ENCODE measurements at regions of chr12 and their contacts with region 1.

Region 1: GRCh38 chr12:56636675-56637540 is 6.8 kb upstream of the BAZ2A start:
- DNase-seq: peak; percentile 99
- H3K4me3 ChIP-seq: peak overlapping the region; percentile 67
- H3K27me3 ChIP-seq: no peaks in the 10 kb centered on the region
- CTCF ChIP-seq: peak; percentile 82

Region 2: DNA sequence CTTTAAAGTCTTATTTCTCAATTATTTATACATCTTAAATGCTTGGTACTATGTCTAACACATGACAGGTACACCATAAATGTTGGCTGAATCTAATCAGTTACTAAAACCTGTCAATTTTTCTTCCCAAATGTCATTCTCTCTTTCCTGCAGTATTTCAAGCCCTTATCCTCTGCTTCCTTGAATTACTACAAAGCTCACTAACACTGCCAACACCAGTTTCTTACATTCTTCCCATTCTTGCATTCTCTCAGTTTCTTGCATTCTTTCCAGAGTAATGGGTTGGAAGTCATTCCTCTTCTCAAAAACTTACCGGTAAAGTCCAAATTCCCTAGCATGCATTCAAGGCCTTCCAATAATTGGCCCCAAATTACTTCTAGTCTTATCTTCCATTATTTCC is 438.1 kb before region 1 on chr12:
- CTCF ChIA-PET with region 1: no interaction called
- POLR2A ChIA-PET with region 1: no interaction called
- DNase-seq: no peak
- H3K4me3 ChIP-seq: no peak overlapping the region
- H3K27me3 ChIP-seq: no peaks in the 10 kb centered on the region
- CTCF ChIP-seq: no peak

Region 3: DNA sequence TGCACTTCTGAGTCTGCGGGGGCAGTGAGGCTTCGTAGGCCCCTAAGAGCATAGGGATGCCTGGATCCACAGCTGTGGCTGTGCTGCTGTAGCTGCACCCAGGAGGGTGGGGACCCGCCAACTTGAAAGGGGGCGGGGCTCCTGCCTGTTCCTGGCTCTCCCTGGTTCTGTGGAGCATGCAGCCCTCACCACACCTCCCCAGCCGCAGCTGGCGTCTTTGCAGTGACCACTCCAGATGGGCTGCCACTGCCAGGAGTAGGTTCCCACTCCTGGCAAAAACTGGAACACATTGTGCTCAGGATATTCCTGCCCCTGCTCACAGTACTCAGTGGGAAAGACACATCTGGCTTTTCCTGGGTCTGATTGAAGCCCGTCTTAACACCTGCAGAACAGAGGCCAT is 223.5 kb before region 1 on chr12:
- CTCF ChIA-PET with region 1: no interaction called
- POLR2A ChIA-PET with region 1: no interaction called
- DNase-seq: no peak
- H3K4me3 ChIP-seq: no peak overlapping the region
- H3K27me3 ChIP-seq: no peaks in the 10 kb centered on the region
- CTCF ChIP-seq: no peak

Region 4: DNA sequence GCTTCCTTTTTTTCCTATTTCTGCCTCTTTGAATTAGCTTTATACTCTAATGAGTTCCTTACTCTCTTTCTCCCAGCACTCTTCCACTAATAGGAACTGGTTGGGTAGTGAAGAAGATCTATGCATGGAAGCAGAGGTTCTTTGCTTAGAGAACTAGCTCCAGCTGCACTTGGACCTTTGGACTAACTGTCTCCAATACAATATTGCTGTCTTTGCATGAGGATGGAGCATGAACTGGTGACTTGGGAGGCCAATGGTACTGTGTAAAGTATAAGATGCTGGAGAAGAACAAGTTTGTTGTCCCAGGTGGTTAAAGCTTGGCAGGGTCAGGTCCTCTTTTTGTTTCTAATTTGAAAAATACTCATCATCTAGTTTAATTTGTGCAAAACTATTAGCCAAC is 146.5 kb before region 1 on chr12:
- CTCF ChIA-PET with region 1: interaction called, 15 read pairs
- POLR2A ChIA-PET with region 1: interaction called, 4 read pairs
- DNase-seq: no peak
- H3K4me3 ChIP-seq: no peak overlapping the region
- H3K27me3 ChIP-seq: peaks cover 6% of the 10 kb centered on the region
- CTCF ChIP-seq: no peak

Region 5: GRCh38 chr12:56510786-56511185 is 126.1 kb before region 1 on chr12:
- CTCF ChIA-PET with region 1: interaction called, 41 read pairs
- POLR2A ChIA-PET with region 1: interaction called, 10 read pairs
- DNase-seq: no peak
- H3K4me3 ChIP-seq: no peak overlapping the region
- H3K27me3 ChIP-seq: no peaks in the 10 kb centered on the region
- CTCF ChIP-seq: no peak

Region 6: DNA sequence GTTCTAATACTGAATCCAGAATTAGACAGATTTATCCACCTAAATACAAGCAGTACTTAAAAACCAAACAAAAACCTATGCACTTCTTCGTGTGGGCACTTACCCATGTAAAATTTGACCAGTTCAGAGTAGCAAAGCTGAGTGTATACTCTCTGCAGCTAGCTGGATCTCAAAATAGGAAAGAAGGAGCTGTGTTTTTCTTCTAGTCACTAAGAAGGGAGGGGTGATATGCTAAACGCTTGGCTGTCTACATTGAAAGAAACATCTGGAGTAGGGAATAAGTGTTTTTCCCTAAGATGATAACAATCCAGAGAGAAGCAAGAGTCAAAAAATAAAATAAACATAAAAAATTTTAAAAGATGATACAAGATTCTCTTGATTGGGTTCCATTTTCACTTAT is 95.3 kb before region 1 on chr12:
- CTCF ChIA-PET with region 1: no interaction called
- POLR2A ChIA-PET with region 1: no interaction called
- DNase-seq: no peak
- H3K4me3 ChIP-seq: no peak overlapping the region
- H3K27me3 ChIP-seq: no peaks in the 10 kb centered on the region
- CTCF ChIP-seq: no peak

Region 7: GRCh38 chr12:56571126-56571525 is 65.8 kb before region 1 on chr12:
- CTCF ChIA-PET with region 1: interaction called, 14 read pairs
- POLR2A ChIA-PET with region 1: no interaction called
- DNase-seq: no peak
- H3K4me3 ChIP-seq: no peak overlapping the region
- H3K27me3 ChIP-seq: no peaks in the 10 kb centered on the region
- CTCF ChIP-seq: no peak

Region 8: DNA sequence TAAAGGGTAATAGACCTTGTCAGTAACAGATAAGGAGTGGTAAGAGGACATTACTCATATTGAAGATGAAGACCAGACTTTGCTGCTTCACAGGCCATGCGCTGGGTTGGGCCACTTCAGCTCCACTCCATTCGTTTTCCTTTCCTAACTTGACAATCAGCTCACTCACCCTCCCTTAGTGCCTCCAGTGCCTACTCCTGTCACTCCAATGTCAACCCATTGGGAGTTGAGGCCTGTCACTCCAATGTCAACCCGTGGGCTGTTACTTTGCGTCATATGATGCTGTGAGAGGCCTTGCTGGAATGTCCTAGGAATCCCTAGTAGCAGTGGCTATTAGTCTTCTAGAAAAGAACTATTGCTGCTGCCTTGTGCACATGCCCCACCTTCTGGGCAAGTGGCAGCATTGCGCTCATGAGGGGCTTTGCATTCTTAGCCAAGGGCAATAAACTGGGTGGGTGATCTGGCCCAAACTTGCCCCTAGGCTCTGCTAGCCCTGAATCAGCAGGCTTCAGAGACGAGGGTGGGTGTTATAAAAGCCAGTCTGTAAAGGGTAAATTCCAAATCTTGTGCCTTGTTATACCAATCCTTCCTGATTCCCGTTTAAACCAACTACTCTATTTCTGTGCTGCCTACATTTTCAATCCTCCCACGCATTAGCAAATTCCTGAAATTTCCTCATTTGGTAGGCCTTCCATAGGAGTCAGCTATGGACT is 42.8 kb before region 1 on chr12:
- CTCF ChIA-PET with region 1: interaction called, 19 read pairs
- POLR2A ChIA-PET with region 1: no interaction called
- DNase-seq: peak; percentile 33
- H3K4me3 ChIP-seq: no peak overlapping the region
- H3K27me3 ChIP-seq: no peaks in the 10 kb centered on the region
- CTCF ChIP-seq: peak; percentile 90

Region 9: DNA sequence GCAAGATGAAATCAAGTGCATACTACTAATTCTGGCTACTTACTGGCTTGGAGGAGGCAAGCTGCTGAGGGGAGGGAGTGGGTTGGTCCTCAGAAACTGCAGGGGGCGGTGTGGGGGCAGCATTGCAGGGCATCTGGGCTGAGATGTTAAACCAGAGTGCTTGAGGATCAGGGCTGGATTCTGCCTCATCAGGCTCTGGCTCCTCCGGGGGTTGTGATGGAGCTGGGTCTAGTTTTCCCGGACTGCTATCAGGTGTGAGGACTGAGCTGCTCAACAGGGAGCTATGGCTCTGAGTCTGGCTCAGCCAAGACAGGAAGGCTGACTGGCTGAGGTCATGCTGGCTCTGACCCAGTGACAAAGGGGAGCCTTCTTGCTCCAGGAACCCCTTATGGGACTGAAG is 35.4 kb before region 1 on chr12:
- CTCF ChIA-PET with region 1: interaction called, 28 read pairs
- POLR2A ChIA-PET with region 1: no interaction called
- DNase-seq: no peak
- H3K4me3 ChIP-seq: no peak overlapping the region
- H3K27me3 ChIP-seq: no peaks in the 10 kb centered on the region
- CTCF ChIP-seq: peak; percentile 22

Region 10: DNA sequence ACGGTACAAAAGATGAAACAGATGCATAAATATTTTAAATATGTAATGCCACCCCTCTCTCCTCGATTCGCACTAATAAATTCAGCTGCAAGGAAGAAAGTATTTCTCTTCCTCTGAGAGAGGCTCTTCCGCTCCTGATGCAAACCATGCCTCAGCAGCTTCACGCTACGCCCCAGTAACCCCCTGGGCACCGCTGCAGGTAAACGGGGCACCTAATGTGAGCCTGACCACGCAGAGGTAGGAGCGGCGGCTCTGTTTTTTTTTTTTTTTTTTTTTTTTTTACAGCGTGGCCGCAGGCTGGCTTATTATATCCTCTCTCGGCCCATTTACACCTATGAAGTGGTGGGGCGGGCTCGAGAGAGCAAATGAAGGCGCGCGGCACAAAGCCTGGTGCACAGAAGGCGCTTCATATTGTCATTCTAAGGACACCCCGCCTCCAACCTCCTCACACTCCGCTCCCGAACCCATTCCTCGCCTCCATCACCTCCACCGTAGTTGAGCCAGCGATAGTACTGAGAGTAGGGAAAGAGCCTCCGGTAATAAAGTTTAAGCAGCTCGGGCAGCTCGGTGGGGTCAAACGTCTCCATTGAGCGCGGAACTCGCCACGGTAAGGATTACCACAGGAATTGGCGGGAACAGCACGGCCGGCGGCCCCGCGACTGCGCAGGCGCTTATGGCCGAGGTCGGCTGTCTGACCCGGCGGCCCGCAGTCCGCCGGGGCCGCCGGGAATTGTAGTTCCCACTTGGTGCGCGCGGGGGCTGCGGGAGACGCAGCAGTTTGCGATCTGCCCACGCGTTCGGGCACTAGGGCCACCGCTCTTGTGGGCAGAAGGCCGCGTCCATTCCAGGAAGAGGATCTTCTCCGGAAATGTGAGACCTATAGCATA is 115.0 kb after region 1 on chr12 and contains the start of gene PRIM1:
- CTCF ChIA-PET with region 1: no interaction called
- POLR2A ChIA-PET with region 1: interaction called, 13 read pairs
- DNase-seq: no peak
- H3K4me3 ChIP-seq: peak within 1 kb of the TSS; percentile 91
- H3K27me3 ChIP-seq: no peaks in the 10 kb centered on the region
- CTCF ChIP-seq: peak; percentile 23
- polyA plus RNA-seq, gene PRIM1: 5.1 and 7.8 TPM in 2 replicates

Region 11: GRCh38 chr12:57611108-57611809 is 974.4 kb after region 1 on chr12 and contains the start of gene ARHGEF25:
- CTCF ChIA-PET with region 1: no interaction called
- POLR2A ChIA-PET with region 1: no interaction called
- DNase-seq: no peak
- H3K4me3 ChIP-seq: peak within 1 kb of the TSS; percentile 82
- H3K27me3 ChIP-seq: no peaks in the 10 kb centered on the region
- CTCF ChIP-seq: no peak
- polyA plus RNA-seq, gene ARHGEF25: 18.0 and 26.0 TPM in 2 replicates